ENCODE measurements at regions of chr2 and their contacts with region 1.

Region 1: GRCh38 chr2:173027181-173028128 is 48.2 kb upstream of the MAP3K20 start:
- DNase-seq: peak; percentile 24 to 89 (median 60)
- ATAC-seq: peak; percentile 62 to 72 (median 68)
- H3K4me3 ChIP-seq: no peak overlapping the region
- H3K4me3 Mint-ChIP-seq: no peak overlapping the region
- H3K27ac ChIP-seq: no peak overlapping the region
- H3K27ac Mint-ChIP-seq: no peak overlapping the region
- H3K4me1 ChIP-seq: no peaks in the 10 kb centered on the region
- H3K4me1 Mint-ChIP-seq: peaks cover 0 to 7% (median 2%) of the 10 kb centered on the region in 3 donors
- H3K27me3 ChIP-seq: no peaks in the 10 kb centered on the region
- H3K27me3 Mint-ChIP-seq: peaks cover 5 to 17% of the 10 kb centered on the region in 2 donors

Region 2: GRCh38 chr2:172753610-172754009 is 273.8 kb before region 1 on chr2:
- CTCF ChIA-PET with region 1: no interaction called
- POLR2A ChIA-PET with region 1: no interaction called
- DNase-seq: no peak
- ATAC-seq: no peak
- H3K4me3 ChIP-seq: no peak overlapping the region
- H3K4me3 Mint-ChIP-seq: no peak overlapping the region
- H3K27ac ChIP-seq: no peak overlapping the region
- H3K27ac Mint-ChIP-seq: no peak overlapping the region
- H3K4me1 ChIP-seq: no peaks in the 10 kb centered on the region
- H3K4me1 Mint-ChIP-seq: no peaks in the 10 kb centered on the region
- H3K27me3 ChIP-seq: peaks cover 0 to 2% of the 10 kb centered on the region in 2 experiments
- H3K27me3 Mint-ChIP-seq: peaks cover 15 to 19% of the 10 kb centered on the region in 2 donors

Region 3: DNA sequence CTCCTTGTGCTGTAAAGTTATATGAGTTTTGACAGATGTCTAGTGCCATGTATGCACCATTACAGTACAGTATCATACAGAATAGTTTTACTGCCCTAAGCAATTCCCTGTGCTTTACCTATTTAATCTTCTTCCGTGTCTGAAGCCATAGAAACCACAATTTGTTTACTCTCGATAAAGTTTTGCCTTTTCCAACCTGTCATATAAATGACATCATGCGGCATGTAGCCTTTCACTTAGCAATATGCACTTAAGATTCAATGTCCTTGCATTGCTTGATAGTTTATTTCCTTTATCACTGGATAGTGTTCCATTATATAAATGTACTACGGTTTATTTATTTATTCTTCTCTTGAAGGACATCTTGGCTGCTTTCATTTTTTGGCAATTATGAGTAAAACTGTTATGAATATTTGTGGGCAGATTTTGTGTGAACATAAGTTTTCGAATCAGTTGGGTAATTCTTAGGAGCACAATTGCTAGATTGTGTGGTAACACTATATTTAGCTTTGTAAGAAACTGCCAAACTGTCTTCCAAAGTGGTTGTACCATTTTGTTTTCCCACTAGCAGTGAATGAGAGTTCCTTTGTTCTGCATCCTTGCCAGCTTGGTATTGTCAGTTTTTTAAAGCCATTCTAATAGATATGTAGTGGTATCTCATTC is 88.6 kb before region 1 on chr2:
- CTCF ChIA-PET with region 1: no interaction called
- POLR2A ChIA-PET with region 1: no interaction called
- DNase-seq: no peak
- ATAC-seq: no peak
- H3K4me3 ChIP-seq: no peak overlapping the region
- H3K4me3 Mint-ChIP-seq: no peak overlapping the region
- H3K27ac ChIP-seq: no peak overlapping the region
- H3K27ac Mint-ChIP-seq: no peak overlapping the region
- H3K4me1 ChIP-seq: peaks cover 6 to 15% of the 10 kb centered on the region in 2 experiments
- H3K4me1 Mint-ChIP-seq: peaks cover 10 to 17% (median 12%) of the 10 kb centered on the region in 3 donors
- H3K27me3 ChIP-seq: no peaks in the 10 kb centered on the region
- H3K27me3 Mint-ChIP-seq: peaks cover 4 to 7% of the 10 kb centered on the region in 2 donors

Region 4: GRCh38 chr2:173210270-173211196 is 183.1 kb after region 1 on chr2:
- CTCF ChIA-PET with region 1: interaction called, 51 to 71 read pairs
- POLR2A ChIA-PET with region 1: interaction called in 1 of 2 experiments, 6 read pairs
- DNase-seq: peak in 34 of 35 experiments; percentile 1 to 76 (median 21)
- ATAC-seq: peak; percentile 56 to 72 (median 61)
- H3K4me3 ChIP-seq: no peak overlapping the region
- H3K4me3 Mint-ChIP-seq: no peak overlapping the region
- H3K27ac ChIP-seq: no peak overlapping the region
- H3K27ac Mint-ChIP-seq: no peak overlapping the region
- H3K4me1 ChIP-seq: no peaks in the 10 kb centered on the region
- H3K4me1 Mint-ChIP-seq: peaks cover 0 to 4% (median 2%) of the 10 kb centered on the region in 3 donors
- H3K27me3 ChIP-seq: no peaks in the 10 kb centered on the region
- H3K27me3 Mint-ChIP-seq: peaks cover 4 to 6% of the 10 kb centered on the region in 2 donors

Region 5: DNA sequence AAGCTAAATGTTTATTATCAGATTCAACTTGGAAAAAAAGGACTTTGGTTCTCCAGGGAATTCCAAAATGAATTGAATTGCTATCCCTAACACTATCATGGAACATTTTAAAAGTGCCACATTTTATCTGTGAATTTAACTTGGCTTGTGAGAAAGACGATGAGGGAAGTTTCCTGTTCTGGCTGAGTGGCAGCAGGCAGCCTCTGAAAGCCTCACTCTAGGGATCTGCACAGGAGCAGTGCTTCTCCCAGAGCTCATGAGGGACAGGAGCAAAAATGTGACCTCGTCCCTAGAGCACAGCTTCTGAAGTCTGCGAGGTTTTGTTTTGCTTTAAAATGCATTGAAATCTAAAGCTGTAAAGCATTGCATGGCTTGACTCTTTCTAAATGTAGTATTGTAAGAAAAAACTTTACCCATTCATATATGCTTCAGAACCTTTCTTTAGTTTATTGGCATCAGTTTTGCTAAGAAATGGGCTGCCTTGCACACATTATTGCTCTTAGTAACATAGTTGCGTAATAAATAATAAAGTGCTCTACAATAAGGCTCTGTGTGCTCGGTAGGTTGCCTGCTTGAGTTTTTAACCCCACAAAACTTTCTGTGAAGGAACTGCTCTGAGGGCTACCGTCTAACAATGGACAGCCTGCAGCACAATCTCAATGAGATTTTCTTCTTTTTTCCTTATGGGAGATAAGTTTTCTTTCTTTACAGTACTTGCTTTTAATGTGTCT is 191.0 kb after region 1 on chr2:
- CTCF ChIA-PET with region 1: interaction called, 4 to 13 read pairs
- POLR2A ChIA-PET with region 1: no interaction called
- DNase-seq: no peak
- ATAC-seq: no peak
- H3K4me3 ChIP-seq: no peak overlapping the region
- H3K4me3 Mint-ChIP-seq: no peak overlapping the region
- H3K27ac ChIP-seq: no peak overlapping the region
- H3K27ac Mint-ChIP-seq: no peak overlapping the region
- H3K4me1 ChIP-seq: peaks cover 0 to 12% of the 10 kb centered on the region in 2 experiments
- H3K4me1 Mint-ChIP-seq: peaks cover 3 to 13% (median 4%) of the 10 kb centered on the region in 3 donors
- H3K27me3 ChIP-seq: no peaks in the 10 kb centered on the region
- H3K27me3 Mint-ChIP-seq: peaks cover 0 to 3% of the 10 kb centered on the region in 2 donors

Measured in T-cell (primary cell).